ENCODE measurements at regions of chr3 and their contacts with region 1.

Region 1: GRCh38 chr3:187197057-187197649 is at the start of gene RTP1:
- DNase-seq: no peak
- ATAC-seq: no peak
- H3K4me3 ChIP-seq: no peak within 1 kb of the TSS
- H3K27ac ChIP-seq: no peak within 1 kb of the TSS
- H3K4me1 ChIP-seq: no peaks in the 10 kb centered on the region
- H3K27me3 ChIP-seq: peaks cover 16% of the 10 kb centered on the region
- CTCF ChIP-seq: no peak
- POLR2A ChIP-seq: no peak
- RAD21 ChIP-seq: no peak
- total RNA-seq, gene RTP1: not detected in 2 replicates

Region 2: DNA sequence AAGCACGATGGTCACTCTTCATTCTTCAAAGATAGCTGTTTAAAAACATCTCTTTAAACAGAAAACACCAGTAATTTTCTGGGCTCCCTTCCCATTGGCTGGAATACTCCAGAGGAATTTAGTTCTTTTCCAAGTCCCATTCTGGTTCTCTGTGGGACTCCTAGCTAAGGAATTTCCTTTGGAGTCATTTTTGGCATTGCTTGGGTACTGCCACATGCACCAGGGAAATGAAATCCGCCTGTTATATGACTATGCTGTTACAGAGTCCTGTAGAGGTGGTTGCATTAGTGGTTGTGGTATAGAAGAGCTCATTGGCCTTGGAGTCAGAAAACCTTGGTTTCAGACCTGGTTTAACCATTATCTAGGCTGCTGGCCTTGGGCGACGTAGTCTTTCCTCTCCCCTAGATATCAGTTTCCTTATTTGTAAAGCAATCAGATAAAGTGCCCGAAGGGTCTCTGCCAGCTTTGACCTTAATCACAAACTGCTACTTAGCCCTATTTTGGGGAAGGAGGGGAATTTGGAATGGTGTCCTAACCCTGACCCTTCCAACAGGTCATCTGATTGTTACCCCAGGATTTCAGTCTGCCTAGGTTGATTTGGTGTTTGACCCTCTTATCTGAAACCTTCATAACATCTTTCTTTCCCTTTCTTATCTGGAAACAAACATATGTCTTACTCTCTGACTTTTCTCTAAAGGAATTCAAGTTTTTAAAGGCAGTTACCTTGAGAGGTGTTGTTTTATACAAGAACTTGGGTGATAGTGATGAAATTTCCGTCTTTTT is 13.6 kb after region 1 on chr3:
- CTCF ChIA-PET with region 1: no interaction called
- POLR2A ChIA-PET with region 1: interaction called, 10 read pairs
- dilution Hi-C with region 1: no loop called
- in situ Hi-C with region 1: no loop called
- intact Hi-C with region 1: loop called (anchors 1 kb)
- DNase-seq: peak; percentile 41
- ATAC-seq: peak; percentile 83
- H3K4me3 ChIP-seq: no peak overlapping the region
- H3K27ac ChIP-seq: no peak overlapping the region
- H3K4me1 ChIP-seq: peaks cover 8% of the 10 kb centered on the region
- H3K27me3 ChIP-seq: no peaks in the 10 kb centered on the region; the same call in 1 of the 2 replicates
- CTCF ChIP-seq: no peak
- POLR2A ChIP-seq: no peak
- RAD21 ChIP-seq: no peak

Region 3: GRCh38 chr3:187342255-187342654 is 145.1 kb after region 1 on chr3:
- CTCF ChIA-PET with region 1: no interaction called
- POLR2A ChIA-PET with region 1: no interaction called
- dilution Hi-C with region 1: no loop called
- in situ Hi-C with region 1: no loop called
- intact Hi-C with region 1: no loop called
- DNase-seq: no peak
- ATAC-seq: no peak
- H3K4me3 ChIP-seq: no peak overlapping the region
- H3K27ac ChIP-seq: no peak overlapping the region
- H3K4me1 ChIP-seq: no peaks in the 10 kb centered on the region
- H3K27me3 ChIP-seq: peaks cover 4% of the 10 kb centered on the region
- CTCF ChIP-seq: no peak
- POLR2A ChIP-seq: no peak
- RAD21 ChIP-seq: no peak